Mammary epithelial cell (primary cell): ENCODE measurements at regions of chr13 and their contacts with region 1.

Region 1: DNA sequence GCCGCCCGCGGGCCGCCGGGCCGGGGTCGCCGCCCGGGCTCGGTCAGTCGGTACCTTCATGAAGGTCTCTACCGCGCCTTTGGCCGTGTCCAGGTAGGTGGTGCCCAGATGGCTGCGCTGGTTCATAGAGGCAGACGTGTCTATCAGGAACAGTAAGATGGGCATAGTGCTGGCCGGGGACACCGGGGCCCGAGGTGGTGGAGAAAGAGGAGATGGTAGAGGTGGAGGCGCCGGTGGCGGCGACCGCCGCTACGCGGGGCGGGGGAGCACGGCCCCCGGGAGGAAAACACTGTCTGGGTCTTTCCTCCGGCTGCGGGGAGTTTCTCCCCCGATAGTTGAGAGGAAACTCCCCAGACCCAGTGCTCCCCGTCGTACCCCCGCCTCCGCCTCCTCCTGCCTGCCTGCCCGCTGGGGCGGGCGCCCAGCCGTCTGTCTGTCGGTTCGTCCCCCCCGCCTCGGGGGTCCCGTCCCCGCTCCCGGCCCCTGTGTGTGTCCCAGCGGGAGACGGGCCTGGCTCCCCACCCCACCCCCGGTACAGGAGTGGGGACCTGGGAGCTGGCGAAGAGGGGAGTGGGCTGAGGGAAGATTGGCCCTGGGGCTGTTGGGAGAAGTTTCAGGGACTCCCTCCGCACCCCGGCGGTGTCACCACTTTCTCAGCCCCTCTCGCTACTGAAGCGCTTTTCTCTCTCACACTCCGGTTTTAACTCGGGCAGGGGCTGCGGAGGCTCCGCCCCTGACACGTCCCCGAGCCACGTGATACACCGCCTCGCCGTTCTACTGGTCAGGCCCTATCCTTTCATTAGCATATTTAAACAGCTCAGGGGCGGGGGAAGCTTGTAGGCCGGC is at the start of gene INTS6:
- DNase-seq: peak; percentile 99
- H3K4me3 ChIP-seq: peak within 1 kb of the TSS; percentile 73 to 94 (median 89)
- H3K27ac ChIP-seq: peak within 1 kb of the TSS; percentile 86
- H3K4me1 ChIP-seq: peaks cover 4% of the 10 kb centered on the region
- H3K27me3 ChIP-seq: no peaks in the 10 kb centered on the region
- CTCF ChIP-seq: no peak
- total RNA-seq, gene INTS6: 57.8 to 65.7 TPM

Region 2: DNA sequence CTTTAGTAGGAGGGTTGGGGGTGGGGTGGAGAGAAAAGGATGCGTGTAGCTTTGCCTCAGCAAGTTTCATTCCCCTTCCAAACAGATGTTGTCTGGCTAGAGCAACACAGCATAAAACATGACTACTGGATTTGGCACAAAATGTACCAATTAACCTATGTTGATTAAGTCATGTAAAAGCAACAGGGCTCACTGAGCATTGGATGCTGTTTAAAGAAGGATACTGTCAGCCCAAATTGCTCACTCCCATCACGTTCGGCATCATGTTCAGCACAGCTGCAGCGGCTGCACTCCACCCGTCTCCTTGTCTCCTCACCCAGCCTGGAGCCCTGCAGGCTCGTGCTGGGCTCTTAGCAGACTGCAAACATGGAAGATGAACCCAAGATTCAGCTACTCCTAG is 686.6 kb before region 1 on chr13:
- CTCF ChIA-PET with region 1: no interaction called
- dilution Hi-C with region 1: no loop called
- in situ Hi-C with region 1: no loop called
- intact Hi-C with region 1: no loop called
- DNase-seq: no peak
- H3K4me3 ChIP-seq: no peak overlapping the region
- H3K27ac ChIP-seq: no peak overlapping the region
- H3K4me1 ChIP-seq: no peaks in the 10 kb centered on the region
- H3K27me3 ChIP-seq: no peaks in the 10 kb centered on the region
- CTCF ChIP-seq: no peak

Region 3: DNA sequence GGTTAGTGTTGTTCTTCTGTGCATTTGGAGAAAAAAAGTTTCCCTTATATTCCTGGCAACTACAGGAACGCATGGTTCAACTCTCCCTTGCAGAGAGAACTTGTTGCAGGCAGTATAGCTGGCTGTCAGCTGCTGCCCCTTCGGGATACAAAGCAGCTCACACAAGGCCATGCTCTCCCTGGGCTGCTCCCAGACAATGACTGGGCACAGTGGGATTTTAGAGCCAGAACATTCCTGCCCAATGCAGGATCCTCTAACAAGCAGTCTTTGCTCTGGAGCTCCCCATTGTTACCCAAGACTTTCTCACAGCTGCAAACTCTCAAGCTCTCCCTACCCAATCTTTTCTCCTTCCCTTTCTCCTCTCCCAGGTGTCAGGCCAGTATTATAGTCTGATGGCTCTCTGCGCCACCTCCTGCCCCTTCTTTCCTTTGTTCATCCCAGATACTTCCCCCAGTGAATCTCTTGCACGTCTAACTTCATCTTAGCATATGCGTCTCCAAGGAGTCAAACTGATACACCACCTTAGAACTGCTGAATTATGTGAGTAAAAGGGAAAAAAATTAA is 140.5 kb before region 1 on chr13:
- CTCF ChIA-PET with region 1: no interaction called
- dilution Hi-C with region 1: no loop called
- in situ Hi-C with region 1: no loop called
- intact Hi-C with region 1: no loop called
- DNase-seq: no peak
- H3K4me3 ChIP-seq: no peak overlapping the region
- H3K27ac ChIP-seq: no peak overlapping the region
- H3K4me1 ChIP-seq: no peaks in the 10 kb centered on the region
- H3K27me3 ChIP-seq: peaks cover 2% of the 10 kb centered on the region
- CTCF ChIP-seq: no peak

Region 4: GRCh38 chr13:51488212-51488611 is 35.6 kb after region 1 on chr13:
- CTCF ChIA-PET with region 1: no interaction called
- dilution Hi-C with region 1: no loop called
- in situ Hi-C with region 1: no loop called
- intact Hi-C with region 1: no loop called
- DNase-seq: peak; percentile 40
- H3K4me3 ChIP-seq: no peak overlapping the region
- H3K27ac ChIP-seq: no peak overlapping the region
- H3K4me1 ChIP-seq: peaks cover 4% of the 10 kb centered on the region
- H3K27me3 ChIP-seq: no peaks in the 10 kb centered on the region
- CTCF ChIP-seq: no peak

Region 5: GRCh38 chr13:51523082-51523518 is 70.5 kb after region 1 on chr13:
- CTCF ChIA-PET with region 1: no interaction called
- dilution Hi-C with region 1: no loop called
- in situ Hi-C with region 1: no loop called
- intact Hi-C with region 1: loop called (anchors 5 kb)
- DNase-seq: peak; percentile 77
- H3K4me3 ChIP-seq: no peak overlapping the region
- H3K27ac ChIP-seq: peak overlapping the region; percentile 63
- H3K4me1 ChIP-seq: peaks cover 38% of the 10 kb centered on the region
- H3K27me3 ChIP-seq: no peaks in the 10 kb centered on the region
- CTCF ChIP-seq: no peak

Region 6: GRCh38 chr13:51583875-51584730 is 131.5 kb after region 1 on chr13 and contains the start of gene WDFY2:
- CTCF ChIA-PET with region 1: no interaction called
- dilution Hi-C with region 1: no loop called
- in situ Hi-C with region 1: loop called (anchors 10 kb)
- intact Hi-C with region 1: loop called (anchors 1 kb)
- DNase-seq: peak; percentile 100
- H3K4me3 ChIP-seq: peak within 1 kb of the TSS; percentile 89 to 96 (median 96)
- H3K27ac ChIP-seq: peak within 1 kb of the TSS; percentile 88
- H3K4me1 ChIP-seq: peaks cover 7% of the 10 kb centered on the region
- H3K27me3 ChIP-seq: no peaks in the 10 kb centered on the region
- CTCF ChIP-seq: no peak
- total RNA-seq, gene WDFY2: 20.7 to 32.9 TPM

Region 7: GRCh38 chr13:51729866-51730546 is 277.4 kb after region 1 on chr13:
- CTCF ChIA-PET with region 1: no interaction called
- dilution Hi-C with region 1: no loop called
- in situ Hi-C with region 1: no loop called
- intact Hi-C with region 1: loop called (anchors 2 kb)
- DNase-seq: peak; percentile 77
- H3K4me3 ChIP-seq: no peak overlapping the region
- H3K27ac ChIP-seq: peak overlapping the region; percentile 79
- H3K4me1 ChIP-seq: peaks cover 33% of the 10 kb centered on the region
- H3K27me3 ChIP-seq: no peaks in the 10 kb centered on the region
- CTCF ChIP-seq: no peak